Activated CD4-positive, alpha-beta T cell treated with anti-CD3 and anti-CD28 coated beads, Interleukin-2, amount 10 ng/mL, durations not matched to agents 24 days and 14 days (primary cell): ENCODE measurements at regions of chr5 and their contacts with region 1.

Region 1: DNA sequence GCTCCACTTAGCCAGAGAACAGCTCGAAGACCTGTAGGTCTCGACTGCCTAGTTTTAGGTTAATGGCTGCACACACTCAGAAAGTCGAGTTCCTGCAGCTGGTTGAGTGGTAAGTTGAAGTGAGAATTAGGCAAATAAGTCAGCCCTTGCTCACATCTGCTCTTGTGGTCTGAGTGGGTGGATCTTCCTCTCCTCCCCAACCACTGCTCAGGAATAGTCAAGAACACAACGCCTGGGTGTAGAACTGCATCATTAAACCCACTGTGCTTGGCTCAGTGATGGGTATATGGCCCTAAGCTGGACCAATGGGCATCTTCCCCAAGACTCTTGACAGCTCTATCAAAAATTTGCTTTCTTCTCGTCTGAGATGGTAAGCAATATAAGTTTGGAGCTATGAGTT is 20.9 kb upstream of the ADAM19 start:
- DNase-seq: peak; percentile 86
- H3K4me3 Mint-ChIP-seq: peak overlapping the region; percentile 42
- H3K27ac Mint-ChIP-seq: peak overlapping the region; percentile 79
- H3K4me1 Mint-ChIP-seq: peaks cover 88% of the 10 kb centered on the region
- H3K27me3 Mint-ChIP-seq: no peaks in the 10 kb centered on the region

Region 2: DNA sequence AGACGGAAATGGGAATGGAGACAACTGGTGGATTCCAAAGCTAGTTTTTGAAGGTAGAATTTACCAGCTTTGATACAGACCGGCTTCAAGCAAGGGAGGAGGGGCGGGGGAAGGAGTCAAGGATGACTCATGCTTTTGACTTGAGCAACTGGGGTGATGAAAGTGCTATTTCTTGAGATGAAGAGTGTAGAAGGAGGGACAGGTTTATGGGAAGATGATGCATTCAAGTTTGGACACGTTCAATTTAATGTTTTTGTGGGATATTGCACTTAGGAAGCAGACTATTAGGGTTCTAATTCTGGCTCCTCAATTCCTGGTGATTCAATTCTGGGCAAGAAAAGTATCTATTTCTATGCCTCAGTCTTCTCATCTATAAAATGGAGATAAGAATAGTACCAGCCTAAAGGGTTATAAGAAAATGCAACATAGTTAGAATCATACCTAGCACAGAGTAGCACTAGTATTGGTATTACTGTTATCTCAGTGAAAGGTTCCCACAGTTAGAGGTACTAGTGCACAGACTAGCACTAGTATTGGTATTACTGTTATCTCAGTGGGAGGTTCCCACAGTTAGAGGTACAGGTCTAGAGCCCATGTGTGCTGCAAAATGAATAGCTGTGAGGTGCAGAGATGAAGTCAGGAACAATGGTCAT is 131.8 kb before region 1 on chr5:
- intact Hi-C with region 1: loop called (anchors 5 kb)
- DNase-seq: peak; percentile 83
- H3K4me3 Mint-ChIP-seq: peak overlapping the region; percentile 0
- H3K27ac Mint-ChIP-seq: peak overlapping the region; percentile 80
- H3K4me1 Mint-ChIP-seq: peaks cover 40% of the 10 kb centered on the region
- H3K27me3 Mint-ChIP-seq: peaks cover 17% of the 10 kb centered on the region

Region 3: GRCh38 chr5:157511651-157512644 is 84.5 kb before region 1 on chr5:
- intact Hi-C with region 1: no loop called
- DNase-seq: peak; percentile 68
- H3K4me3 Mint-ChIP-seq: no peak overlapping the region
- H3K27ac Mint-ChIP-seq: peak overlapping the region; percentile 73
- H3K4me1 Mint-ChIP-seq: peaks cover 60% of the 10 kb centered on the region
- H3K27me3 Mint-ChIP-seq: no peaks in the 10 kb centered on the region

Region 4: DNA sequence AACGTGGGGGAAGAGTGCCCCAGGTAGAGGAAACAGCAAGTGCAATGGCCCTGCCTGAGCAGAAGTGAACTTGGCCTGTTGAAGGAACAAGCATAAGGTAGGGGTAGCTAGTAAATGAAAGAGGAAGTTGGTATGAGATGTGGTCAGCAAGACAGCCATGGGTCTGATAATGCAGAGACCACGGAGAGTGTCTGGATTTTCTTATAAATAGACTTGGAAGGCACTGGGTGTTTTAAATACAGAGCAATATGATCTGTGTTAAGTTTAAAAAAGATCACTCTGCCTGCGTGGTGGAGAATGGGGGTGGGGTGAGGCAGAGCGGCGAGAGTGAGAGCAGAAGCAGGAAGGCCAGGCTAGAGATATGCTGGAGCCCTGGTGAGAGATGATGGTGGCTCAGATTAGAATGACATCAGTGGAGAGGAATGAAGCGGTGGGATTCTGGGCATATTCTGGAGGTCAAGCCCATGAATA is 25.1 kb before region 1 on chr5:
- intact Hi-C with region 1: loop called (anchors 1 kb)
- DNase-seq: peak; percentile 83
- H3K4me3 Mint-ChIP-seq: peak overlapping the region; percentile 91
- H3K27ac Mint-ChIP-seq: peak overlapping the region; percentile 94
- H3K4me1 Mint-ChIP-seq: peaks cover 62% of the 10 kb centered on the region
- H3K27me3 Mint-ChIP-seq: no peaks in the 10 kb centered on the region

Region 5: GRCh38 chr5:157582731-157583620 is 13.5 kb before region 1 on chr5:
- intact Hi-C with region 1: loop called (anchors 1 kb)
- DNase-seq: peak; percentile 75
- H3K4me3 Mint-ChIP-seq: peak overlapping the region; percentile 65
- H3K27ac Mint-ChIP-seq: peak overlapping the region; percentile 80
- H3K4me1 Mint-ChIP-seq: peaks cover 56% of the 10 kb centered on the region
- H3K27me3 Mint-ChIP-seq: no peaks in the 10 kb centered on the region

Region 6: GRCh38 chr5:157611571-157612476 is 15.3 kb after region 1 on chr5:
- intact Hi-C with region 1: loop called (anchors 1 kb)
- DNase-seq: no peak
- H3K4me3 Mint-ChIP-seq: no peak overlapping the region
- H3K27ac Mint-ChIP-seq: peak overlapping the region; percentile 78
- H3K4me1 Mint-ChIP-seq: peaks cover 61% of the 10 kb centered on the region
- H3K27me3 Mint-ChIP-seq: no peaks in the 10 kb centered on the region